Vagina (tissue), 2 donors: ENCODE measurements at regions of chr11 and their contacts with region 1.

Region 1: DNA sequence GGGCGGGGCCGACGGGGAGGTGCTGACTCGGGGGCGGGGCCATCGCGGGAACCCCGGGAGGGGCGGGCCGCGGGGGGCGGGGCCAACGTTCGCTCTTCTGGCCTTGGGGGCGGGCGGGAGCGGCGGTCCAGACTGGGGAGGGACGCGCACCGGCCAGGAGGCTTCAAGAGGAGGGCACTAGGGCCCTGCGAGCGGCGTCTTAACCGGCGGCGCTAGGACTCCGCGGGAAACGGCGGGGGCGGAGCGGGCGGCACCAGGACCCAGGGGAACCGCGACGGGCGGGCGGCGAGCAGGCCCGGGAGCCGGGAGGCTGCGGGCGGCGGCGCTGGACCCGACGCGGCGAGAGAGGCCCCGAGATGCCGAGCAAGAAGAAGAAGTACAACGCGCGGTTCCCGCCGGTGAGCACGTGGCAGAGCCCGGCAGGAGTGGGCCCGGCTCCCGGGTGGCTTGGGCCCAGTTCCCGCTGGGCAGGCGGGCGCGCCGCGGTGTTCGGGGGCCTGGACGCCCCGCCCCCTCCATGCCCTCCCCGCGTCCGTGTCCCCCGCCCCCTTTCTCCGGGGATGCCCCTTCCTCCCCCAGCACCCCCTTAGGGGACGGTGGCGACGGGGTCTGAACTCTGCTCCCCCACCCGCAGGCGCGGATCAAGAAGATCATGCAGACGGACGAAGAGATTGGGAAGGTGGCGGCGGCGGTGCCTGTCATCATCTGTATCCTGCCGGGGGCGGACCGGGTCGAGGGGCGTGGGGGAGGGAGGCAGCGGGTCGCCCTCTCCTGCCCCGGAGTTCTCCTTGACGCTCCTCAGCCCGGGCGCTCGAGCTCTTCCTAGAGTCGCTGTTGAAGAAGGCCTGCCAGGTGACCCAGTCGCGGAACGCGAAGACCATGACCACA is at the start of gene DRAP1:
- DNase-seq: peak in 1 of 2 donors; percentile 98
- H3K4me3 ChIP-seq: peak within 1 kb of the TSS; percentile 92
- H3K27ac ChIP-seq: peak within 1 kb of the TSS; percentile 93
- H3K4me1 ChIP-seq: peaks cover 58% of the 10 kb centered on the region
- H3K27me3 ChIP-seq: no peaks in the 10 kb centered on the region
- CTCF ChIP-seq: peak in 1 of 3 experiments; percentile 31
- POLR2A ChIP-seq: peak in 1 of 2 donors; percentile 89
- total RNA-seq, gene DRAP1: 59.2 TPM

Region 2: GRCh38 chr11:65859200-65859811 is 60.1 kb before region 1 on chr11:
- intact Hi-C with region 1: no loop called
- DNase-seq: peak in 1 of 2 donors; percentile 99
- H3K4me3 ChIP-seq: peak overlapping the region; percentile 95 to 100
- H3K27ac ChIP-seq: peak overlapping the region; percentile 93
- H3K4me1 ChIP-seq: peaks cover 52% of the 10 kb centered on the region
- H3K27me3 ChIP-seq: no peaks in the 10 kb centered on the region
- CTCF ChIP-seq: no peak
- POLR2A ChIP-seq: peak in 1 of 2 donors; percentile 90

Region 3: GRCh38 chr11:65961232-65961901 is 42.0 kb after region 1 on chr11 and contains the start of gene SART1:
- intact Hi-C with region 1: loop called (anchors 5 kb)
- DNase-seq: peak in 1 of 2 donors; percentile 96
- H3K4me3 ChIP-seq: peak within 1 kb of the TSS; percentile 89 to 95
- H3K27ac ChIP-seq: peak within 1 kb of the TSS; percentile 78
- H3K4me1 ChIP-seq: peaks cover 33% of the 10 kb centered on the region
- H3K27me3 ChIP-seq: no peaks in the 10 kb centered on the region
- CTCF ChIP-seq: peak in 1 of 3 experiments; percentile 31
- POLR2A ChIP-seq: peak in 1 of 2 donors; percentile 29
- total RNA-seq, gene SART1: 26.0 TPM

Region 4: GRCh38 chr11:66022401-66023185 is 103.2 kb after region 1 on chr11:
- intact Hi-C with region 1: no loop called
- DNase-seq: no peak
- H3K4me3 ChIP-seq: peak overlapping the region in 1 of 2 donors; percentile 8
- H3K27ac ChIP-seq: no peak overlapping the region
- H3K4me1 ChIP-seq: peaks cover 4% of the 10 kb centered on the region
- H3K27me3 ChIP-seq: no peaks in the 10 kb centered on the region
- CTCF ChIP-seq: peak; percentile 74 to 86 (median 81)
- POLR2A ChIP-seq: no peak